PC-9 (cell line): ENCODE measurements at regions of chr7 and their contacts with region 1.

Region 1: GRCh38 chr7:136405931-136406777 is 429.0 kb upstream of the MTPN start:
- DNase-seq: peak in 1 of 2 experiments; percentile 38
- H3K4me3 ChIP-seq: no peak overlapping the region
- H3K27ac ChIP-seq: no peak overlapping the region
- H3K4me1 ChIP-seq: no peaks in the 10 kb centered on the region
- H3K27me3 ChIP-seq: no peaks in the 10 kb centered on the region
- CTCF ChIP-seq: peak; percentile 92

Region 2: GRCh38 chr7:137006293-137006692 is 600.1 kb after region 1 on chr7:
- CTCF ChIA-PET with region 1: no interaction called
- POLR2A ChIA-PET with region 1: interaction called, 10 read pairs
- intact Hi-C with region 1: no loop called
- DNase-seq: no peak
- H3K4me3 ChIP-seq: no peak overlapping the region
- H3K27ac ChIP-seq: no peak overlapping the region
- H3K4me1 ChIP-seq: no peaks in the 10 kb centered on the region
- H3K27me3 ChIP-seq: no peaks in the 10 kb centered on the region
- CTCF ChIP-seq: no peak

Region 3: DNA sequence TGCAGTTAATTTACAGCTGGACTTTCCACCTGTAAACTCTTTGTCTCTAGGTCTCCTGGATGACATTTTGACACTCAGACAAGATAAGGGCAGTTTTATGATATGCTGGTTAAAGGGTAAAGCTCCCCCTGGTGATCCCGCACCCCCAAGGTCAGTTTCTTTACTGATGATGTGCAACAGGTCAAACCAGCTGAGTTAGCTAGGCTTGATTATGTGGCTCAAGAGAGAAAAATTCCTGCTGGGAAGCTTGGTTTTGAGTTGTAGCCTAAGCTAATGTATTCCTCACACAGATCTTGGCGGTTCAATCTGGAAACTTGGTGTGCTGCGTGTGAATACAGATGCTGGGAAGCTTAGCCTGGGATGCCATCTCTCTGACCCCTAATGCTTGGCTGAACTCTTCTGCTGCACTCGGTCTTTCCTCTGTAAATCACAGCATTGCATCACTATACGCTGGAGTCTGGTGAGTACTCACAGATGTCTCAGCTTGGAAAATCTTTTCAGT is 1658.8 kb after region 1 on chr7:
- CTCF ChIA-PET with region 1: no interaction called
- POLR2A ChIA-PET with region 1: no interaction called
- intact Hi-C with region 1: no loop called
- DNase-seq: no peak
- H3K4me3 ChIP-seq: no peak overlapping the region
- H3K27ac ChIP-seq: no peak overlapping the region
- H3K4me1 ChIP-seq: no peaks in the 10 kb centered on the region
- H3K27me3 ChIP-seq: no peaks in the 10 kb centered on the region
- CTCF ChIP-seq: no peak